ENCODE measurements at regions of chr15 and their contacts with region 1.

Region 1: DNA sequence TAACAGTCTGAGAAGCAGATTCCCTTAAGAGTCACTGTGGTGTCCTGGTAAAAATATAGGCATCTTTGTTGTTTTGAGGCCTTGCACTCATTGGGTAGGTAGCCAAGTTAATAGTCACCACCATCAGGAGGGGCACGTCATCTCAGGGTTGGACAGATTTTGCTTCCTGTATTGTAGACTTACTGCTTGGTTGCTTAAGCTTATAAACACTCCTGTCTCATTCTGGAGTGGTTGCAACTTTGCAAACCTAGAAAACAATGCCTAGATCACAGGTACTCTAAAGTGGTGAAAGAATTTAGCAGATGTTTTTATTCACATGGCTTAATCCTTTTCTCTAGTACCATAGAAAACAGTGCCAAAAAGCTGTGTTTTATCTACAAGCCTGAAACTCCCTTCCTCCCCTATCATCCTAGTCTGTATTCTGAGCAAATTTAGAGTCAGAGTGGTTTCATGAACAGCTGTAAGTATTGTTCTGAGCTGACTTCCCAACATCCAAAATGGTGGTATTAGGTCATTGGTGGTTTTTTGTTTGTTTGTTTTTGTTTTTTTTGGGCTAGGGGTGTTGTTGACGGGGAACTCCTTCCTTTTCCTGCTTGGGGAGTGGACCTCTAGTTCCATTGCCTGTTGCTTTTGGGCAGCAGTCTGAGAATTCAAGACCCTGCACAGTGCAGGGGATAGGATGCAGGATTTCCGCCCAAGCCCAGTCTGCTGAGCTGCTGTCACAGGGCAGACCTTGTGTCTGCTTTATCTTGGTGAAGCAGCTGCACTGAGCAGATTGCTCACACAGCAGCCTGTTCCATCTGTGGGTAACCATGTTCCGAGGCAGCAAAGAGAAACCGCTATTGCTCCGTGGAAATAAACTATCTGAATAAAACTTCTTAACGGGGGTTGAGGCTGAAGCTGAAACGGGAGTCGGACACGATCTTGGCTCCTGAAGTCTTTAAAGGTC is 202.0 kb downstream of the AKAP13 start:
- DNase-seq: peak in 8 of 9 donors; percentile 51 to 72 (median 66)
- ATAC-seq: peak; percentile 73
- H3K4me3 ChIP-seq: peak overlapping the region; percentile 49
- H3K4me3 Mint-ChIP-seq: peak overlapping the region; percentile 79 to 92 (median 85)
- H3K27ac ChIP-seq: peak overlapping the region; percentile 75
- H3K27ac Mint-ChIP-seq: peak overlapping the region; percentile 83 to 99 (median 94)
- H3K4me1 ChIP-seq: peaks cover 48 to 49% of the 10 kb centered on the region in 2 donors
- H3K4me1 Mint-ChIP-seq: peaks cover 56 to 77% (median 74%) of the 10 kb centered on the region in 7 donors
- H3K27me3 ChIP-seq: no peaks in the 10 kb centered on the region
- H3K27me3 Mint-ChIP-seq: no peaks in the 10 kb centered on the region

Region 2: GRCh38 chr15:85296615-85297402 is 285.6 kb before region 1 on chr15:
- CTCF ChIA-PET with region 1: no interaction called
- POLR2A ChIA-PET with region 1: no interaction called
- intact Hi-C with region 1: loop called in 1 of 2 experiments (anchors 2 kb)
- DNase-seq: peak; percentile 19 to 79 (median 71)
- ATAC-seq: peak; percentile 98
- H3K4me3 ChIP-seq: peak overlapping the region; percentile 20
- H3K4me3 Mint-ChIP-seq: peak overlapping the region; percentile 5 to 78 (median 60)
- H3K27ac ChIP-seq: no peak overlapping the region
- H3K27ac Mint-ChIP-seq: peak overlapping the region in 2 of 9 donors; percentile 12 to 62
- H3K4me1 ChIP-seq: no peaks in the 10 kb centered on the region
- H3K4me1 Mint-ChIP-seq: peaks cover 7 to 22% (median 14%) of the 10 kb centered on the region in 7 donors
- H3K27me3 ChIP-seq: no peaks in the 10 kb centered on the region
- H3K27me3 Mint-ChIP-seq: peaks cover 0 to 1% (median 0%) of the 10 kb centered on the region in 5 donors

Region 3: DNA sequence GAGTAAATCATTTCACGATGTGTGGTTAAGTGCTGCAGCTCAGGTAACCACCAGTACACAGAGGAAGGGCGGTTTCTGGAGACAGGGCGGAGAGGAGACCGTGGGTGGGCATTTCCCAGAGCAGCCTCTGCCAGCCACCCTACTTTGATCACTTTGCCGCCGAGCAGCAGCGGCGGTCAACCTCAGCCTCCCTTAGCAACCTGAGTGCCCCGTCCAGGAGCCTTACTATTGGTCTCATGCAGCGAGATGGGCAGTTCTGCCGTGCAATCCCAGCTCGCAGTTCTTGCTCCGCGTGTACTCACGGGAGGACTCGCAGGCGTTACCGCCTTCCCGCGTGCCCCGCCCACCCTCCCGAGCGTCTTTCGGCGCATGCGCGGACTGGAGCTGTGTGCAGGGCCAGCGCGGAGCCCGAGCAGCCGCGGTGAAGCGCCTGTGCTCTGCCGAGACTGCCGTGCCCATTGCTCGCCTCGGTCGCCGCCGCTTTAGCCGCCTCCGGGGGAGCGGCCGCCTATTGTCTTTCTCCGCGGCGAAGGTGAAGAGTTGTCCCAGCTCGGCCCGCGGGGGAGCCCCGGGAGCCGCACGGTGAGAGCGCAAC is 202.1 kb before region 1 on chr15 and contains the start of gene AKAP13:
- CTCF ChIA-PET with region 1: no interaction called
- POLR2A ChIA-PET with region 1: no interaction called
- intact Hi-C with region 1: loop called in 1 of 2 experiments (anchors 10 kb)
- DNase-seq: peak; percentile 78 to 93 (median 88)
- ATAC-seq: peak; percentile 87
- H3K4me3 ChIP-seq: peak within 1 kb of the TSS; percentile 62
- H3K4me3 Mint-ChIP-seq: peak within 1 kb of the TSS; percentile 86 to 96 (median 92)
- H3K27ac ChIP-seq: peak within 1 kb of the TSS; percentile 79
- H3K27ac Mint-ChIP-seq: peak within 1 kb of the TSS; percentile 84 to 96 (median 94)
- H3K4me1 ChIP-seq: peaks cover 16 to 23% of the 10 kb centered on the region in 2 donors
- H3K4me1 Mint-ChIP-seq: peaks cover 29 to 65% (median 47%) of the 10 kb centered on the region in 7 donors
- H3K27me3 ChIP-seq: no peaks in the 10 kb centered on the region
- H3K27me3 Mint-ChIP-seq: peaks cover 0 to 2% (median 0%) of the 10 kb centered on the region in 5 donors
- total RNA-seq, gene AKAP13: 170 to 400 (median 241) TPM

Region 4: DNA sequence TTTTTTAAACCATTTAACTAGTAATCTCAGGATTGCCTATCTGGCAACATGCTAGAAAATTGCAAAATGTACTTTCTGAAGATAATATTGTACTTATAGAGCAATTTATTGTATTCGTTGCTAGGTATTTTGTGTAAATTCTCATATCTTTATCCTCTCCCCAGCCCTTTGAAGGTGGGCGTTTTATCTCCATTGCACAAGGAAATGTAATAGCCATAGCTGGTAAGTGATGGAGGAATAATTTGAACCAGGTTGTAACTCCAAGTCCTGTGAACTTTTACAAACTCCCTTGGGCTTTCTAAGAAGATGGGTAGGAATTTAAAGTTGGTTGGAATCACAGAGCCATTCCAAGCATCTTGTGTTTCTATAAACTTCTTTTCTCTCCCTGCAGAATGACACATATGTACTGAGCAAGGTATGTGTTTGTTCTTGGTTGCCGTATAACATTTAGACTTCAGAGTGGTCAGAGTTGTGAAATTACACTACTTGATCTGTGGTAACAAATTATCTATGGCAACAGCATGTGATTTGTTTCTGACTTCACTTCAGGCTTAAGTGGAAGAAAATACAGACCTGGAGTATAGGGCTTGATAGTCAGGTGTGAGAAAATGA is 31.1 kb before region 1 on chr15:
- CTCF ChIA-PET with region 1: no interaction called
- POLR2A ChIA-PET with region 1: no interaction called
- intact Hi-C with region 1: no loop called
- DNase-seq: no peak
- ATAC-seq: no peak
- H3K4me3 ChIP-seq: no peak overlapping the region
- H3K4me3 Mint-ChIP-seq: no peak overlapping the region
- H3K27ac ChIP-seq: no peak overlapping the region
- H3K27ac Mint-ChIP-seq: no peak overlapping the region
- H3K4me1 ChIP-seq: peaks cover 3 to 7% of the 10 kb centered on the region in 2 donors
- H3K4me1 Mint-ChIP-seq: peaks cover 10 to 47% (median 32%) of the 10 kb centered on the region in 7 donors
- H3K27me3 ChIP-seq: no peaks in the 10 kb centered on the region
- H3K27me3 Mint-ChIP-seq: no peaks in the 10 kb centered on the region

Region 5: GRCh38 chr15:85597155-85597815 is 14.9 kb after region 1 on chr15:
- CTCF ChIA-PET with region 1: no interaction called
- POLR2A ChIA-PET with region 1: interaction called, 4 read pairs
- intact Hi-C with region 1: loop called (anchors 1 kb)
- DNase-seq: peak in 5 of 9 donors; percentile 19 to 37 (median 21)
- ATAC-seq: peak; percentile 87
- H3K4me3 ChIP-seq: no peak overlapping the region
- H3K4me3 Mint-ChIP-seq: peak overlapping the region in 8 of 10 donors; percentile 7 to 61 (median 30)
- H3K27ac ChIP-seq: no peak overlapping the region
- H3K27ac Mint-ChIP-seq: peak overlapping the region; percentile 4 to 73 (median 45)
- H3K4me1 ChIP-seq: peaks cover 13 to 16% of the 10 kb centered on the region in 2 donors
- H3K4me1 Mint-ChIP-seq: peaks cover 19 to 46% (median 29%) of the 10 kb centered on the region in 7 donors
- H3K27me3 ChIP-seq: no peaks in the 10 kb centered on the region
- H3K27me3 Mint-ChIP-seq: no peaks in the 10 kb centered on the region

Region 6: GRCh38 chr15:85646538-85647091 is 64.2 kb after region 1 on chr15:
- CTCF ChIA-PET with region 1: no interaction called
- POLR2A ChIA-PET with region 1: no interaction called
- intact Hi-C with region 1: loop called in 1 of 2 experiments (anchors 5 kb)
- DNase-seq: peak in 1 of 9 donors; percentile 35
- ATAC-seq: peak; percentile 78
- H3K4me3 ChIP-seq: no peak overlapping the region
- H3K4me3 Mint-ChIP-seq: peak overlapping the region in 2 of 10 donors; percentile 21 to 51
- H3K27ac ChIP-seq: no peak overlapping the region
- H3K27ac Mint-ChIP-seq: peak overlapping the region in 6 of 9 donors; percentile 10 to 81 (median 48)
- H3K4me1 ChIP-seq: peaks cover 8 to 35% of the 10 kb centered on the region in 2 donors
- H3K4me1 Mint-ChIP-seq: peaks cover 28 to 45% (median 38%) of the 10 kb centered on the region in 7 donors
- H3K27me3 ChIP-seq: no peaks in the 10 kb centered on the region
- H3K27me3 Mint-ChIP-seq: no peaks in the 10 kb centered on the region

Region 7: DNA sequence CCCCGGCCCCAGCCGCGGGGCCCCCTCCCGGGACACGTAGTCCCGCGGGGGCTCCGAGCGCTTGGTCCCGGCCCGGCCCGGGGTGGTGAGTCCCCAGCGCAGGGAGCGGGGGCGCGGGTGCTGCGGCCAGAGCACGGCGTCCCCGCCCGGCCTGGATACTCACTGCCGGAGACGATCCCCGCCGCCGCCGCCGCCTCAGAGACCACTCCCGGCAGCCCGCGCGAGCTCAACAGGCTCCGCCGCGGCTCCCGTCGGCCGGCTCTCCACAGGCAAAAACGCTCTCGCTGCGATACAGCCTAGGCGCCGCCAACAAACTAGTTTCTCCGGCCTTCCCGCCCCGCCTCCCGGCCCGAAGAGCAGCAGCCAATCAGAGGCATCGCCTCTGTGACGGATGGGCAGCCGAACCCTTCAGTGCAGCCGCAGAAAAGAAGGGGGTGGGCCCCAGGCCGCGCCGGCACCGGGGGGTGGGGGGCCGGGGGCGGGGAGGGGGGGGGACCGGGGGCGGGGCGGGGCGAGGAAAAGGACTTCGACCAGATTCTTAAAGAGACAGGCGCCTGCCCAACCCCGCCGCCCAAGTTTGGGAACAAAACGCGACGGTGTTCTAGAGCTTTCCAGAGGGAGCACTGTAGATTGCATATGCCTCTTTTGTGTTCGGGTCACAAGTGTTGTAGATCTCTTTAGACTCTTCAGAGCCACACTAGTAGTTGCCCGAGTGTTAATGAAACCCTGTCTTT is 212.4 kb after region 1 on chr15 and contains the start of gene KLHL25:
- CTCF ChIA-PET with region 1: no interaction called
- POLR2A ChIA-PET with region 1: no interaction called
- intact Hi-C with region 1: loop called in 1 of 2 experiments (anchors 2 kb)
- DNase-seq: peak; percentile 77 to 93 (median 91)
- ATAC-seq: peak; percentile 99
- H3K4me3 ChIP-seq: peak within 1 kb of the TSS; percentile 66
- H3K4me3 Mint-ChIP-seq: peak within 1 kb of the TSS; percentile 85 to 96 (median 94)
- H3K27ac ChIP-seq: peak within 1 kb of the TSS; percentile 84
- H3K27ac Mint-ChIP-seq: peak within 1 kb of the TSS; percentile 77 to 91 (median 86)
- H3K4me1 ChIP-seq: peaks cover 22 to 28% of the 10 kb centered on the region in 2 donors
- H3K4me1 Mint-ChIP-seq: peaks cover 26 to 49% (median 44%) of the 10 kb centered on the region in 7 donors
- H3K27me3 ChIP-seq: no peaks in the 10 kb centered on the region
- H3K27me3 Mint-ChIP-seq: peaks cover 0 to 3% (median 0%) of the 10 kb centered on the region in 5 donors
- total RNA-seq, gene KLHL25: 5.5 to 13.1 (median 10.6) TPM

Measured in naive thymus-derived CD4-positive, alpha-beta T cell (primary cell).